Ascending aorta (tissue), 2 donors: ENCODE measurements at regions of chrX and their contacts with region 1.

Region 1: DNA sequence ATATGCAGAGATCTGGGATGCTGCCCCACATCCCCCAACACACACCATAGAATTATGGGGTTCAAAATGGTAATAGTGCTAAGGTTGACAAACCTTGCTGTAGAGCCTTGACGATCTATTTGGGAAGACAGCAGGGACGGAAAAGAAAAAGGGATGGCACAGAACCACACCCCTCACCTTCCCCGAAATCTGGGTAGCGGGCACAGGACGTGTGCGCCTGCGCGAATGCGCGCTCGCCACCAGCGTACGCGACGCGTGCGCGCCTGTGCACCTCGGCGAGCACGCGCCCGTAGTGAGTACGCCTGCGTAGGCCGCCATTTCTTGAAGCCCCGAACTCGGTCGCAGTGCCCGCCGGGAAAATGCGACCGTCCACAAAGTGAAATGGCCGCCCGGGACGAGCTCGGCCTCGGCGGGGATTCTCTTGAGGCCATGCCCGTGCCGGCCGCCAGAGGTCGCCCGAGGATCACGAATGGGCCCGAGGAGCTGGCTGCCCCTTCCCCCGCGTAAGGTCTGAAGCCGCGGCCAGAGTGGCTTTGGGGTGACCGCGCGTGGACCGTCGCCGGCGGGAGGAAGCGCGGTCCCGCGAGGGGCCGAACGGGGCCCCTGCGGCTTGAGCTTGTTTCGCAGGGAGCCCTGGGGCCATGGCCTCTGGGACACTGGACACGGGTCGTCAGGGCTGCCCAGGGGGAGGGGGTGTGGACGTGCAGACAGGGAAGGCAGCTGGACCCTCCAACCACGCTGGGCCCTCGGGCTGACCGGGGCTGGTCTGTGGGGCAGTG is 43.6 kb downstream of the ZNF185 start:
- DNase-seq: peak; percentile 44 to 93
- H3K4me3 ChIP-seq: peak overlapping the region; percentile 49 to 65
- H3K27ac ChIP-seq: peak overlapping the region; percentile 71 to 82
- H3K4me1 ChIP-seq: no peaks in the 10 kb centered on the region
- H3K27me3 ChIP-seq: no peaks in the 10 kb centered on the region
- CTCF ChIP-seq: peak; percentile 76 to 92 (median 83)

Region 2: DNA sequence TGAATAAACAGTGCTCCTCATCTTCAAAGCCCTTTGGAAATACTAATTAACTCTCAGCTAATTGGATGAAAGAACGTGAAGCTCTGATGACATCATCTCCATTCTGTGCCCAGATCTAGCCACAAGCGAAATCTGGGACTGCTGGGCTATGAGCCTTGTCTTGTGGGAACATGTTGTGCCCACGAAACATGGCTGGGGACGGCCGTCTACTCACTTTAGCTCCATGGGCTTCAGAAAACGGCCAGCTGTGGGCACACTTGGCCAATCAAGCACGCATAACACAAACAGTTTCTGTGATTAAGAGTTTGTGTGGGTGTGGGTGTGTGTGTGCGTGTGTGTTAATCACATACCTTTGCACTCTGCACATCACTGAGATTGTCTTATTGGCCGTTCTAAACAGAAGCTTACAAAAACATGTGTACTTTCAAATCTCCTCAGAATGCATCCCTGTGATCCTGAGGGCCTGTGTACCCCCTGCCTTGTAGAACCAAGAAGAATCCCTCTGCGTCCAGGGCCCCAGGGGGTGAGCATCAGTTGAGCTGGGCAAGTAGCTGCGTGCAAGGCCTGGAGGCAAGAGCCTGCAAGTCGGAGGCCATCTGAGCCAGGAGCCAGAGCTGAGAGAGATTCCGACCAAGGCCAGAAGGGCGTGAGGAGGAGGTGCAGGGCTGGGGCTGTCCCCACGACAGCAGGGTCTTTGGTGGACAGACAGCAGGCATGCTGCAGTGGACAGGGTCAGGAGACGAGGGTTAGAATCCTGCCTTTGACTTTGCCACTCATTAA is 62.4 kb before region 1 on chrX:
- intact Hi-C with region 1: no loop called
- DNase-seq: no peak
- H3K4me3 ChIP-seq: no peak overlapping the region
- H3K27ac ChIP-seq: no peak overlapping the region
- H3K4me1 ChIP-seq: no peaks in the 10 kb centered on the region
- H3K27me3 ChIP-seq: no peaks in the 10 kb centered on the region
- CTCF ChIP-seq: no peak

Region 3: DNA sequence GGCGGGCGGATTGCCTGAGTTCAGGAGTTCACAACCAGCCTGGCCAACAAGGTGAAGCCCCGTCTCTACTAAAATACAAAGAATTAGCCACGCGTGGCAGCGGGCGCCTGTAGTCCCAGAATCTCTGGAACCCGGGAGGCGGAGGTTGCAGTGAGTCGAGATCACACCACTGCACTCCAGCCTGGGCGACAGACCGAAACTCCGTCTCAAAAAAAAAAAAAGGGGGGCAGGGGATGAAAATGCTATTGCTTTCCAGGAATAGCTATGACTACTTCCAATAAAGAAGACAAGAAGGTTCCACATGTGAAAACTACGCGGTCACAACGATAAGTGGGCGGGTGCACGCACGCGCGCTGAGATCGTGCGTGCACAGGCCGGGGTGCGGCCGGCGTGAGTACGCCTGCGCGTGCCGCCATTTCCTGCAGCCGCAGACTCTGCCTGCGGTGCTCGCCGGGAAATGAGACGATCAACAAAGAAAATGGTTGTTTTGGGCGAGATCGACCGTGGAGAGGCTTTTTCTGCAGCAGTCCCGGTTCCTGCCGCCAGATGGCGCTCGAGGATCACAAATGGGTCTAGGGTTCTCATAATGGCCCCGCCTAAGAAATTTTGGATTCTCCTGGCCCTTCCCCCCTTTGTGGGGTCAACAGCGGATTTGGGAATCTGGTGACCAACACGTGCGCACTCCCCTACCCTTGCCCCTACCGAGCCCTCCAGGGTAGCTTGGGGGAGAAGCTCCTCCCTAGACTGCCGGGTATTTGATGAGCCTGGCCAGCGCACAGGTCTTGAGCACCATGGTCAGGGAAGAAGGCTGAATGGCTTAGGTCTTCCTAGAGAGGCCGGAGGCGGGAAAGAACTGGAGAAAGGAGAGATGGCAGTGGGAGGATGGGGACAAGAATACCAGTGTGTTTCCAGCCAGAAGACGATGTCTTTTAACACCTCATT is 17.3 kb after region 1 on chrX:
- intact Hi-C with region 1: loop called (anchors 2 kb)
- DNase-seq: peak; percentile 42 to 93
- H3K4me3 ChIP-seq: peak overlapping the region; percentile 29 to 36
- H3K27ac ChIP-seq: peak overlapping the region; percentile 40 to 54
- H3K4me1 ChIP-seq: no peaks in the 10 kb centered on the region
- H3K27me3 ChIP-seq: no peaks in the 10 kb centered on the region
- CTCF ChIP-seq: peak; percentile 80 to 86 (median 84)

Region 4: GRCh38 chrX:153507484-153508178 is 566.1 kb after region 1 on chrX:
- intact Hi-C with region 1: loop called (anchors 10 kb)
- DNase-seq: peak in 1 of 2 donors; percentile 88
- H3K4me3 ChIP-seq: no peak overlapping the region
- H3K27ac ChIP-seq: peak overlapping the region in 1 of 2 donors; percentile 3
- H3K4me1 ChIP-seq: peaks cover 4 to 6% of the 10 kb centered on the region in 2 donors
- H3K27me3 ChIP-seq: no peaks in the 10 kb centered on the region
- CTCF ChIP-seq: peak; percentile 86 to 91 (median 87)